Activated CD4-positive, alpha-beta memory T cell treated with anti-CD3 and anti-CD28 coated beads for 36 hours (primary cell): ENCODE measurements at regions of chr3 and their contacts with region 1.

Region 1: GRCh38 chr3:48507351-48508061 is 3.5 kb upstream of the SHISA5 start:
- DNase-seq: peak; percentile 84
- H3K4me3 Mint-ChIP-seq: no peak overlapping the region
- H3K27ac Mint-ChIP-seq: peak overlapping the region; percentile 74
- H3K4me1 Mint-ChIP-seq: peaks cover 42% of the 10 kb centered on the region
- H3K27me3 Mint-ChIP-seq: no peaks in the 10 kb centered on the region

Region 2: DNA sequence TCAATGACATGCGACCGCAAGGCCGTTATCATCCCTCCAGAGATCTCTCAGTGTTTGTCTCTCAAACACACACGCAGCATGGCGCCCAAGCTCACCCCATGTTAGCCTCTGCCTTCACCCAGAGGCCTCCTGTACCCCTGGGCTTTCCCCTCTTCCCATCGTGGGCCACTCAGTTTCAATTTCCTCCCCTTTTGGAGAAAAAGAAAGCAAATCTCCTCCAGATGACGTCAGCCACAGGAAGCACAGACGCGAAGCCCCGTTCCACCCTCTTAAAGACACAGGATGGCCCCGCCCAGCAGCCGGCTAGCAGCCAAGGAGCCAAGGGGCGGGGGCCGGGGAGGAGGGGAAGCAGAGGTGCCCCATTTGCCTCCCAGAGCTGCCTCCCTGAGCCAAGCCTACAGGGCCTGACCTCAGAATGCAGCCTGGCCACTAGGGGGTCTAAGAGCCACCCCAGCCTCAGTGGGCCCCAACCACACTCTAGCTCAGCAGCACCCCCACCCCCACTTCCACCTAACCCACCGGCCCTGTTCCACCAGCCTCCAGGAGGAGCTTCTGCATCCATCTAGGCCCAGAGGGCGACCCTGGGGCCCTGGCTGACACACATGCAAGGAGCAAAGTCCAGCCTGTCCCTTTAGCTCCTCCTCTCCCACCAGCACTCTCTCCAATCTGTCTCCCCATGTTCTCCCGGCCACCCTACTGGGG is 34.4 kb before region 1 on chr3:
- CTCF ChIA-PET with region 1: interaction called, 9 read pairs
- POLR2A ChIA-PET with region 1: interaction called, 5 read pairs
- intact Hi-C with region 1: loop called (anchors 1 kb)
- DNase-seq: peak; percentile 98
- H3K4me3 Mint-ChIP-seq: peak overlapping the region; percentile 79
- H3K27ac Mint-ChIP-seq: peak overlapping the region; percentile 98
- H3K4me1 Mint-ChIP-seq: peaks cover 50% of the 10 kb centered on the region
- H3K27me3 Mint-ChIP-seq: no peaks in the 10 kb centered on the region

Region 3: DNA sequence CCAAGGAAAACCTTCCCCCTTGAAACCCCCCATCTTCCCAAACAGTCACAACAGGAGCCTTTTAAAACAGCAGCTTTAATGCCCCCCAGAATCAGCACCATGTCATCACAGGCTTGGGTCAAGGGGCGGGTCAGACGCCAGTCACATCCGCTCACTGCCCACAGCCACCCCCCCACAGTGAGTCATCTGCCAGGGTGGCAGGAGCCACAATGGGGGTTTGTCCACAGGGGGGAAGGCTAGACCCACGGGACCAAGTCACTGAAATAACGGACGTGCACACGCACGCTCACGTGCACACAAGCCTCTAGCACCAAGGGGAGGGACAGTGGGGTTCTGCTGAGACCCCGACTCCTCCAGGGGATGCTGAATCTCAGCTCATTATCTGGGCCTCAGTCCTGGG is 56.5 kb after region 1 on chr3:
- CTCF ChIA-PET with region 1: no interaction called
- POLR2A ChIA-PET with region 1: no interaction called
- intact Hi-C with region 1: no loop called
- DNase-seq: peak; percentile 55
- H3K4me3 Mint-ChIP-seq: no peak overlapping the region
- H3K27ac Mint-ChIP-seq: no peak overlapping the region
- H3K4me1 Mint-ChIP-seq: peaks cover 3% of the 10 kb centered on the region
- H3K27me3 Mint-ChIP-seq: no peaks in the 10 kb centered on the region